ENCODE measurements at regions of chr3 and their contacts with region 1.

Region 1: GRCh38 chr3:58491506-58492402 is at the start of gene KCTD6:
- DNase-seq: peak; percentile 94 to 98 (median 95)
- ATAC-seq: peak; percentile 94 to 99 (median 96)
- H3K4me3 ChIP-seq: peak within 1 kb of the TSS; percentile 61 to 99 (median 77)
- H3K27ac ChIP-seq: peak within 1 kb of the TSS; percentile 67 to 90 (median 82)
- H3K4me1 ChIP-seq: peaks cover 6 to 65% (median 46%) of the 10 kb centered on the region in 12 donors
- H3K27me3 ChIP-seq: no peaks in the 10 kb centered on the region
- CTCF ChIP-seq: peak; percentile 46 to 87 (median 76)
- POLR2A ChIP-seq: peak in 1 of 2 donors; percentile 27
- total RNA-seq, gene KCTD6: 5.7 to 10.5 (median 6.9) TPM

Region 2: GRCh38 chr3:58305882-58306711 is 185.7 kb before region 1 on chr3 and contains the starts of genes HTD2 and RPP14:
- intact Hi-C with region 1: loop called in 5 of 10 experiments (anchors 2 to 10 kb)
- DNase-seq: peak; percentile 98 to 100 (median 99)
- ATAC-seq: peak; percentile 94 to 97 (median 96)
- H3K4me3 ChIP-seq: peak within 1 kb of the TSS; percentile 80 to 97 (median 86)
- H3K27ac ChIP-seq: peak within 1 kb of the TSS; percentile 90 to 99 (median 96)
- H3K4me1 ChIP-seq: peaks cover 5 to 36% (median 26%) of the 10 kb centered on the region in 12 donors
- H3K27me3 ChIP-seq: peaks cover 0 to 5% (median 0%) of the 10 kb centered on the region in 9 donors
- CTCF ChIP-seq: peak; percentile 95 to 99 (median 96)
- POLR2A ChIP-seq: peak in 1 of 2 donors; percentile 76
- total RNA-seq, gene HTD2: 5.7 to 21.6 (median 12.4) TPM
- total RNA-seq, gene RPP14: 9.6 to 32.4 (median 24.0) TPM

Region 3: GRCh38 chr3:58324391-58325390 is 167.1 kb before region 1 on chr3:
- intact Hi-C with region 1: loop called in 1 of 10 experiments (anchors 5 kb)
- DNase-seq: no peak
- ATAC-seq: peak in 1 of 4 donors; percentile 12
- H3K4me3 ChIP-seq: no peak overlapping the region
- H3K27ac ChIP-seq: peak overlapping the region in 8 of 12 donors; percentile 0 to 67 (median 23)
- H3K4me1 ChIP-seq: peaks cover 0 to 23% (median 10%) of the 10 kb centered on the region in 12 donors
- H3K27me3 ChIP-seq: no peaks in the 10 kb centered on the region
- CTCF ChIP-seq: no peak
- POLR2A ChIP-seq: no peak

Region 4: DNA sequence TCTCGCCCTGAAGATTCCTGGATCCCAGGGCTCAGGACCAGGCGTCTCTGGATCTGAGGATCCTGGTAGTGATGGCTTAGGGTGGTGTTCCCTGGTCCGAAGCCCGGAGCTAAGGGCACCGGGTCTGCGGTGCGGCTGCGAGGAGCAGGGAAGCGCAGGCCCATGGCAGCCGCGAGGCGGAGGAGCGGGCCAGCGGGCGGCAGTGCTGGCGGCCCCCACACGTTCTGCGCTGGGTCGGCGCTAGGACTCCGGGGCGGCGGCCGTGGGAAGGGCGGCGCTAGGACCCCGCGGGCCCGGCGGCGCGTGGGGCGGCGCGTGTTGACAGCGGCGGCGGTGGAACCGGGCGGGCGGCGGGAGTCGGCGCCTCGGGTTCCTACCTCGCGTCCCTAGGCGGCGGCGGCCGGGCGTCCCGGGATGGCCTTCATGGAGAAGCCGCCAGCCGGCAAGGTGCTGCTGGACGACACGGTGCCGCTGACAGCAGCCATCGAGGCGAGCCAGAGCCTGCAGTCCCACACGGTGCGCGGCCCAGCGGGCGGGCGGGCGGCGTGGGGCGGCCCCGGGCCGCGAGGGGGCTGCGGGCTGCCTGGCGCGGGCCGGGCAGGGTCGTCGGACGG is 159.1 kb before region 1 on chr3 and contains the start of gene PXK:
- intact Hi-C with region 1: loop called (anchors 1 to 10 kb)
- DNase-seq: peak; percentile 84 to 92 (median 88)
- ATAC-seq: peak; percentile 78 to 97 (median 94)
- H3K4me3 ChIP-seq: peak within 1 kb of the TSS; percentile 57 to 98 (median 78)
- H3K27ac ChIP-seq: peak within 1 kb of the TSS; percentile 10 to 74 (median 63)
- H3K4me1 ChIP-seq: peaks cover 0 to 55% (median 20%) of the 10 kb centered on the region in 12 donors
- H3K27me3 ChIP-seq: no peaks in the 10 kb centered on the region
- CTCF ChIP-seq: peak in 4 of 12 donors; percentile 9 to 32 (median 18)
- POLR2A ChIP-seq: peak in 1 of 2 donors; percentile 61
- total RNA-seq, gene PXK: 8.2 to 24.3 (median 13.6) TPM

Region 5: GRCh38 chr3:58433400-58434169 is 58.2 kb before region 1 on chr3 and contains the start of gene PDHB:
- intact Hi-C with region 1: loop called in 4 of 10 experiments (anchors 1 to 5 kb)
- DNase-seq: peak; percentile 93 to 96 (median 95)
- ATAC-seq: peak; percentile 95 to 99 (median 98)
- H3K4me3 ChIP-seq: peak within 1 kb of the TSS; percentile 44 to 87 (median 76)
- H3K27ac ChIP-seq: peak within 1 kb of the TSS; percentile 87 to 97 (median 92)
- H3K4me1 ChIP-seq: peaks cover 2 to 35% (median 24%) of the 10 kb centered on the region in 12 donors
- H3K27me3 ChIP-seq: no peaks in the 10 kb centered on the region
- CTCF ChIP-seq: peak in 1 of 12 donors; percentile 6
- POLR2A ChIP-seq: peak in 1 of 2 donors; percentile 79
- total RNA-seq, gene PDHB: 154 to 274 (median 192) TPM

Region 6: GRCh38 chr3:58526515-58526957 is 34.8 kb after region 1 on chr3:
- intact Hi-C with region 1: loop called in 5 of 10 experiments (anchors 5 kb)
- DNase-seq: no peak
- ATAC-seq: peak in 2 of 4 donors; percentile 14 to 28
- H3K4me3 ChIP-seq: no peak overlapping the region
- H3K27ac ChIP-seq: no peak overlapping the region
- H3K4me1 ChIP-seq: peaks cover 0 to 14% (median 3%) of the 10 kb centered on the region in 12 donors
- H3K27me3 ChIP-seq: no peaks in the 10 kb centered on the region
- CTCF ChIP-seq: no peak
- POLR2A ChIP-seq: no peak

Region 7: DNA sequence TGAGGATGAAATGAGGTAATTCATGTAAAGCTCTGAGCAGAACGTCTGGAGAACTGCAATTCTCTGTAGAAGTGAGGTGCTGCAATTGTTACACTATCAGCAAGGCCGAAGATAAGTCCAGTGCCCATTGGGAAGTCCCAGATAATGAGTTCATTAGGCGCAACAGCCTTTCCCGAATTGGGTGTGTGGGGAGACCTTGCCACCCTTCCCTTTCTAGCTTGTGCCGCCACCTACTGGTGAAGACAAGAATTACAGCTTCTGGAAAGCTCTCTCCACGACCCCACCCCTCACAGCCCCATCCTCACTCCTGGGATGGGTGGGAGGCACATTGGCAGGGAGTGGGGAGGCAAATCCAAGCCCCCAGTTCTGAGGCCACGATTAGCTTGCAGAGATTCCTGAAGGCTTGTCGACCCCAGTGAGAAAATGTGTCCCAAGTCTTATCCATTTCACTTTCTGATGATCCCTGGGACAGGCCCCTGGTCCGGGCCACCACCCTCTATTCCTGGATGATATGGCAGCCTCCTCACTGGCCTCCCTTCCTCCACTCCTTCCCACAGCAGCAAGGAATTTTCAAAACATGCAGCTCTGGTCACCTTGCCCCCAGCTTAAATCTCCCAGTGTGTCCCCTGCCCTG is 138.4 kb after region 1 on chr3:
- intact Hi-C with region 1: loop called in 1 of 10 experiments (anchors 10 kb)
- DNase-seq: peak in 4 of 5 donors; percentile 61 to 70 (median 62)
- ATAC-seq: peak in 3 of 4 donors; percentile 19 to 49 (median 36)
- H3K4me3 ChIP-seq: no peak overlapping the region
- H3K27ac ChIP-seq: peak overlapping the region in 8 of 12 donors; percentile 65 to 92 (median 87)
- H3K4me1 ChIP-seq: peaks cover 11 to 42% (median 26%) of the 10 kb centered on the region in 12 donors
- H3K27me3 ChIP-seq: no peaks in the 10 kb centered on the region
- CTCF ChIP-seq: peak; percentile 89 to 99 (median 96)
- POLR2A ChIP-seq: no peak

Region 8: DNA sequence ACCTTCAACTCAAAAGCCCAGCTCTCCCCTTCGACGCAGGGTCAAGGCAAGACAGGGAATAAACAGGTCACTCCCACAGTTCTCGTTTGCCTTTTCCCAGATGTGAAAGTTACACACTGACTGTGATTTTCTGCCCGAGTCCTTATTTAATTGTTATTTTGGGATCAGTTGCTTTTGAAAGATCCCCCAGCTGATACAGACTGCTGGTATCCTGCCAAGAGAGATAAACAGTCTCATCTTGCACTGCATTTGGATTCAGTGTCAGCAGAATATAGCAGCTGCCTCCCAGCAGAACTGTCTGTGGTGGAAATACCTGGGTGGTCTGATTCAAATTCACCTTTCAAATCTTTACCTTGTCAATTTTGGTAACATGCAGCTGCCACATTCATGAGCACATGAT is 230.8 kb after region 1 on chr3:
- intact Hi-C with region 1: no loop called
- DNase-seq: no peak
- ATAC-seq: no peak
- H3K4me3 ChIP-seq: no peak overlapping the region
- H3K27ac ChIP-seq: no peak overlapping the region
- H3K4me1 ChIP-seq: no peaks in the 10 kb centered on the region
- H3K27me3 ChIP-seq: peaks cover 0 to 4% (median 0%) of the 10 kb centered on the region in 9 donors
- CTCF ChIP-seq: no peak
- POLR2A ChIP-seq: no peak